ENCODE measurements at regions of chr17 and their contacts with region 1.

Region 1: DNA sequence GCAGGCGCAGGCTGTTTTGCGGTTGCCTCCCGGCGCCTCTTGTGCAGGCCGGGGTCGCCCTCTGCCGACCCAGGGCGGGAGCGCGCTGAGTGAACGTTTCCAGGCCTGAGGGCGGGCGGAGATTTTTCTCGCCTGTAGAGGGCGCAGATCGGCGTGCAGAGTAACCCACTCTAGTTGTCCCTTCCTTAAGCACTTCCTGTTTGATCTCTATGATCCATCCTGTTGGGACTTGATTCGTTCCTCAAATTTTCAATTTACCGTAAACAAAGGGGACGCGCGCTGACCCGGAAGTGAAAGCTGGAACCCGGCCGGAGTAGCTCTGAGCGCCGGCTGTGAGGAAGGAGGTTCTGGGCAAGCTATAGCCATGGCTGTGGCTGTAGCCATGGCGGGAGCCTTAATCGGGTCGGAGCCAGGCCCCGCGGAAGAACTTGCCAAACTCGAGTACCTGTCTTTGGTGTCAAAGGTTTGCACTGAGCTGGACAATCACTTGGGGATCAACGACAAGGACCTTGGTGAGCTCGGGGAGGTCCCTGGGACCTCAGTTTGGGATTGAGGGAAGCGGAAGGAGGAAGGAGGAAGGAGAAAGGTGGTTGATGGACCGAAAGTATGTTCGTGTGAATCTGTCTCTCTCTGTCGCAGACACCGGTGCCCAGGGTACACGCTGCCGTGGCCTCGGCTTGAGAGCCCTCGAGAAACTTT is at the start of gene DHX8:
- DNase-seq: peak; percentile 99
- ATAC-seq: peak; percentile 94 to 99 (median 96)
- H3K4me3 ChIP-seq: peak within 1 kb of the TSS; percentile 86
- H3K4me3 Mint-ChIP-seq: peak within 1 kb of the TSS; percentile 100
- H3K27ac ChIP-seq: peak within 1 kb of the TSS; percentile 78
- H3K27ac Mint-ChIP-seq: peak within 1 kb of the TSS; percentile 97 to 100
- H3K4me1 ChIP-seq: peaks cover 22% of the 10 kb centered on the region
- H3K4me1 Mint-ChIP-seq: peaks cover 20 to 24% of the 10 kb centered on the region in 2 donors
- H3K27me3 ChIP-seq: no peaks in the 10 kb centered on the region
- H3K27me3 Mint-ChIP-seq: no peaks in the 10 kb centered on the region
- CTCF ChIP-seq: peak; percentile 100
- total RNA-seq, gene DHX8: 88.3 to 106 (median 105) TPM

Region 2: DNA sequence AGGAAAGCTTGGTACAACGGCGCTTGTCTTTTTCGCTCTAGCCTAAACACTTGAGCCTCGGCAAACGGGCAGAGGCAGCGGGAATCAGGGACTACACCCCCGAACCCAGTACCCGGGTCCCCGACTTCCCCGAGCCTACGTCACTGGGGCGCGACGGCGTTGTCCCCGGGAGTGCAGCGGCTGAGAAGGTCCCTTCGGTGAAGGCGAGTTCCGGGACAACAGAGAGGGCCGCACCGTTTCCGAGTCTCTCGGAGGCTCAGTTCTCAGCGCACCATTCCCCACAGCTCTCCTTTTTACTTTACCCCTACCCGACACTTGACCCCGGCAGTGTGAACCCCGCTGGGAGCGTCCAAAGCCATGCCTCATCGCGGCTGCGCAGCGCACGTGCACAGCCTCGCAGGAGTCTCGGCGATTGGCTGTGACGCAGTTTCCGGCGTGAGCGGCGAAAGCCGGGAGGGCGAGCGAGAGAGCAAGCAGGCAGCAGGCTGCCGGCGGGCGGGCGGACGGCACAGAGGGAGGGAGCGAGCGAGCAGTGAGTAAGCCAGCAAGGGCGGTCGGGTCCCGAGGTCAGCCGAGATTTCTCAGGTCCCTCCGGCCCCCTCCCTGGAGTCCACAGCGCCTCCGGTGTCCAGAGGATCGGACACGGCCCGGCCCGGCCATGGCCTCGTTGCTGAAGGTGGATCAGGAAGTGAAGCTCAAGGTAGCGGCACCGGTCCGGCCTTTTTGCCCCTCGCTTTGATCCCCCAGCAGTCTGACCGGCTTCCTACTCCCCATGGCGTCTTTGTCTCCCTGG is 650.7 kb before region 1 on chr17 and contains the start of gene PSME3:
- intact Hi-C with region 1: loop called (anchors 10 kb)
- DNase-seq: peak; percentile 90 to 94
- ATAC-seq: peak; percentile 89 to 94 (median 92)
- H3K4me3 ChIP-seq: peak within 1 kb of the TSS; percentile 85
- H3K4me3 Mint-ChIP-seq: peak within 1 kb of the TSS; percentile 97
- H3K27ac ChIP-seq: peak within 1 kb of the TSS; percentile 93
- H3K27ac Mint-ChIP-seq: peak within 1 kb of the TSS; percentile 98
- H3K4me1 ChIP-seq: peaks cover 7% of the 10 kb centered on the region
- H3K4me1 Mint-ChIP-seq: peaks cover 22 to 29% of the 10 kb centered on the region in 2 donors
- H3K27me3 ChIP-seq: no peaks in the 10 kb centered on the region
- H3K27me3 Mint-ChIP-seq: peaks cover 0 to 5% of the 10 kb centered on the region in 2 donors
- CTCF ChIP-seq: no peak
- total RNA-seq, gene PSME3: 82.8 to 92.5 (median 90.6) TPM

Region 3: DNA sequence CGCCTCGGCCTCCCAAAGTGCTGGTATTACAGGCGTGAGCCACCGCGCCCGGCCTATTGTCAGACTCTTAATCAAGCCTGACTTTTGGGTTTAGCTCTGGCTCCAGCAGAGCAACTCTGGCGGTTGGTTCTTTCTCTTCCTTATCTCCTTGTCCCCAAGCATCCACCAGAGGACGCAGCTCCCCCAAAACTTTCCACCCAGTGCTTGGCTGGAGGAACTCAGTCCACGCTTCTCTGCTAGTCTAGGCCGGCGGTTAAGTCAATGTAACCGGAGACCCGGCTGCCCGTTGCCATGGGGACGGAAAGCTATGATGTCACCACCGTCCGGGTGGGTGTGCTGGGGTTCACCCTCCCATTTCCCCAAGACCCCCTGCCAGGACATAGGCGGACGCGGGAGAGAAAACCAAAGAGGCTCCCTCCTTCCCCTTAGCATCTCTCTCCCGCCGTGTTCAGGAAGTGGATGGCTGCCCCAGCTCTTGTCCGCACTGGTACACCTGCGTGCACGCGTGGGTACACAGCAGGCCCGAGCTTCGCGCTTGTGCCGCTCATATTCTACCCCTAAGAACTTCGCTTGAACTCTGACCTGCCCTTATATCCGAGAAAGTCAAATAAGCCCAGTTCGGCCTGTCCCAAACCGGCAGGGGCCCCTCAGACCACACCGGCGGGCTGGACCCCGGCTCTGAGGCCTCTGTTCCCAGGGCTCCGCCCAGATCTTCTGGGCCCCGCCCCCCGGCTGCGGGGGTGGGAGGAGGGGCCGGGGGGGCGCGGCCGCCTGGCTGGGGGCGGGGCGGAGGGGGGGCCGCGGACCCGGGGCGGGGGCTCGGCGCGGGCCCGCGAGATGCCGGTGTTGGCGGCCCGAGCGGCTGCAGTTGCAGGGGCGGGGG is 459.2 kb before region 1 on chr17 and contains the start of gene RND2:
- intact Hi-C with region 1: loop called (anchors 2 kb)
- DNase-seq: peak; percentile 75 to 89
- ATAC-seq: peak; percentile 68 to 77 (median 72)
- H3K4me3 ChIP-seq: peak within 1 kb of the TSS; percentile 63
- H3K4me3 Mint-ChIP-seq: peak within 1 kb of the TSS; percentile 95
- H3K27ac ChIP-seq: peak within 1 kb of the TSS; percentile 59
- H3K27ac Mint-ChIP-seq: peak within 1 kb of the TSS; percentile 81 to 95
- H3K4me1 ChIP-seq: peaks cover 34% of the 10 kb centered on the region
- H3K4me1 Mint-ChIP-seq: peaks cover 10 to 32% of the 10 kb centered on the region in 2 donors
- H3K27me3 ChIP-seq: no peaks in the 10 kb centered on the region
- H3K27me3 Mint-ChIP-seq: no peaks in the 10 kb centered on the region
- CTCF ChIP-seq: peak; percentile 49
- total RNA-seq, gene RND2: 0.12 to 0.58 (median 0.14) TPM

Region 4: GRCh38 chr17:43388359-43389045 is 95.3 kb before region 1 on chr17:
- intact Hi-C with region 1: loop called (anchors 1 kb)
- DNase-seq: peak; percentile 94 to 95
- ATAC-seq: peak; percentile 70 to 85 (median 74)
- H3K4me3 ChIP-seq: peak overlapping the region; percentile 88
- H3K4me3 Mint-ChIP-seq: peak overlapping the region; percentile 100
- H3K27ac ChIP-seq: peak overlapping the region; percentile 99
- H3K27ac Mint-ChIP-seq: peak overlapping the region; percentile 98 to 99
- H3K4me1 ChIP-seq: peaks cover 26% of the 10 kb centered on the region
- H3K4me1 Mint-ChIP-seq: peaks cover 35 to 41% of the 10 kb centered on the region in 2 donors
- H3K27me3 ChIP-seq: no peaks in the 10 kb centered on the region
- H3K27me3 Mint-ChIP-seq: no peaks in the 10 kb centered on the region
- CTCF ChIP-seq: no peak

Region 5: DNA sequence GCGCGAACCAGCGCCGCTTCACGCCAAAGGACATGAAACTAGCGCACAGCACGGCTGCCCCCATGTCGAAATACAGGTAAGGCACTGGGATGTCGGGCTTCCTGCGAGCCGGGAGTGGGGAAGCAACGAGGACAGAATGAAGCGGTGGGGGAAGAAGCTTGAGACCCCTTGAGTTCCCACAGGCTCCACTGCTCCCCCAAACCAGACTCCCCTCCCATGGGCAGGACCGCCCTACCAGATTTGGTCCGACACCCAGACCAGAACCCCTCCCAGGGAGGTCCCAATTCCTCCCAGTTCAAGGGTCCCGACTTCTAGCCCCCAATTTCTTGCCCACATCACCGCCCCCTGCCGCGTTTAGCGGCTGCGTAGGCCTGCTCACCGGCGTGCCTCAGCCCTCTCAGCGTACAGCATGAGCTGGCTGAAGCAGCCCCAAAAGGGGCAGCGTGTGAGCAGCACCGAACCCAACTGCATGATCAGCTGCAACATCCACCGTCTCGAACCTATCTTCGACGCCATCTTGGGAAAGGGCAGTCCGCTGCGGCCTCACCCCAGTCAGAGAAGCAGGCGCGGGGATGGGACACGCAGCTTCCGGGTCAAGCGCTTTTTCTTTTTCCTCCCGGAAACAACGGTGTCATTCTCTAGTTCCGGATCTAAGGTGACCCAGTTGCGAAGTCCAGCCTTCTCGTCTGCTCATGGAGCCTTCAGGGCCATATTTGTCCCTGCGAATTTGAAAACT is 530.8 kb after region 1 on chr17 and contains the start of gene TMEM101:
- intact Hi-C with region 1: loop called (anchors 10 kb)
- DNase-seq: peak; percentile 83 to 95
- ATAC-seq: peak; percentile 96 to 100 (median 99)
- H3K4me3 ChIP-seq: peak within 1 kb of the TSS; percentile 73
- H3K4me3 Mint-ChIP-seq: peak within 1 kb of the TSS; percentile 97
- H3K27ac ChIP-seq: no peak within 1 kb of the TSS
- H3K27ac Mint-ChIP-seq: peak within 1 kb of the TSS; percentile 90 to 94
- H3K4me1 ChIP-seq: peaks cover 12% of the 10 kb centered on the region
- H3K4me1 Mint-ChIP-seq: peaks cover 11 to 16% of the 10 kb centered on the region in 2 donors
- H3K27me3 ChIP-seq: no peaks in the 10 kb centered on the region
- H3K27me3 Mint-ChIP-seq: no peaks in the 10 kb centered on the region
- CTCF ChIP-seq: no peak
- total RNA-seq, gene TMEM101: 11.3 to 13.9 (median 11.5) TPM

Measured in natural killer cell (primary cell).